ENCODE measurements at regions of chr4 and their contacts with region 1.

Region 1: GRCh38 chr4:36244257-36245079 is at the start of gene ARAP2:
- DNase-seq: peak; percentile 43 to 92 (median 67)
- ATAC-seq: peak; percentile 70
- H3K4me3 ChIP-seq: peak within 1 kb of the TSS; percentile 90
- H3K4me3 Mint-ChIP-seq: peak within 1 kb of the TSS; percentile 99
- H3K27ac ChIP-seq: peak within 1 kb of the TSS; percentile 76 to 93
- H3K27ac Mint-ChIP-seq: peak within 1 kb of the TSS; percentile 95
- H3K4me1 ChIP-seq: peaks cover 18% of the 10 kb centered on the region
- H3K4me1 Mint-ChIP-seq: peaks cover 50% of the 10 kb centered on the region
- H3K27me3 ChIP-seq: no peaks in the 10 kb centered on the region
- H3K27me3 Mint-ChIP-seq: no peaks in the 10 kb centered on the region
- CTCF ChIP-seq: no peak
- total RNA-seq, gene ARAP2: 54.3 to 63.4 TPM

Region 2: GRCh38 chr4:36224972-36225903 is 19.2 kb before region 1 on chr4:
- CTCF ChIA-PET with region 1: interaction called, 3 read pairs
- POLR2A ChIA-PET with region 1: interaction called, 12 read pairs
- intact Hi-C with region 1: no loop called
- DNase-seq: no peak
- ATAC-seq: no peak
- H3K4me3 ChIP-seq: no peak overlapping the region
- H3K4me3 Mint-ChIP-seq: peak overlapping the region; percentile 32
- H3K27ac ChIP-seq: no peak overlapping the region
- H3K27ac Mint-ChIP-seq: peak overlapping the region; percentile 65
- H3K4me1 ChIP-seq: peaks cover 9% of the 10 kb centered on the region
- H3K4me1 Mint-ChIP-seq: peaks cover 88% of the 10 kb centered on the region
- H3K27me3 ChIP-seq: no peaks in the 10 kb centered on the region
- H3K27me3 Mint-ChIP-seq: no peaks in the 10 kb centered on the region
- CTCF ChIP-seq: no peak

Region 3: DNA sequence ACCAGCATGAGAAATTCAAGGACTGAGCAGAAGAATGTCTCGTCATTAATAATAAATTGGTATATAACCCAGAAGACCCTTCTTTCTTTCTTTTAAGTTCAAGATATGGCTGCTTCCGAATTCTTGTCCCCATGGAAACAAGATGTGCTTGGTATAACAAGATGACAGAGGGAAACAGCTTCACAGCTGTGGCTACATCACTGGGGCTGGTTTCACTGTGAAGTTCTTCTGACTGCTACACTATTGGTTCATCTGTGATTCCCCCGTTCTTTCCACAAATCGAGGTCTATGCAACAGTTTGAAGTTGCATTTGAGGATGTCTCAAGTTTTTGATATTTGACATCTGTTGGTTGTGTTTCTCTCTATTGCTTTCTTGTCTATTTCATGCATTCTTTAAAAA is 24.6 kb after region 1 on chr4:
- CTCF ChIA-PET with region 1: interaction called, 4 read pairs
- POLR2A ChIA-PET with region 1: interaction called, 24 read pairs
- intact Hi-C with region 1: no loop called
- DNase-seq: peak in 6 of 14 experiments; percentile 11 to 87 (median 58)
- ATAC-seq: peak; percentile 92
- H3K4me3 ChIP-seq: no peak overlapping the region
- H3K4me3 Mint-ChIP-seq: no peak overlapping the region
- H3K27ac ChIP-seq: peak overlapping the region in 1 of 2 donors; percentile 35
- H3K27ac Mint-ChIP-seq: peak overlapping the region; percentile 74
- H3K4me1 ChIP-seq: no peaks in the 10 kb centered on the region
- H3K4me1 Mint-ChIP-seq: peaks cover 42% of the 10 kb centered on the region
- H3K27me3 ChIP-seq: no peaks in the 10 kb centered on the region
- H3K27me3 Mint-ChIP-seq: no peaks in the 10 kb centered on the region
- CTCF ChIP-seq: no peak

Region 4: GRCh38 chr4:36325499-36325898 is 81.0 kb after region 1 on chr4:
- CTCF ChIA-PET with region 1: interaction called, 6 read pairs
- POLR2A ChIA-PET with region 1: interaction called, 5 read pairs
- intact Hi-C with region 1: loop called (anchors 2 to 10 kb)
- DNase-seq: peak in 4 of 14 experiments; percentile 17 to 78 (median 70)
- ATAC-seq: peak; percentile 29
- H3K4me3 ChIP-seq: no peak overlapping the region
- H3K4me3 Mint-ChIP-seq: peak overlapping the region; percentile 1
- H3K27ac ChIP-seq: peak overlapping the region in 1 of 2 donors; percentile 4
- H3K27ac Mint-ChIP-seq: peak overlapping the region; percentile 28
- H3K4me1 ChIP-seq: peaks cover 24% of the 10 kb centered on the region
- H3K4me1 Mint-ChIP-seq: peaks cover 47% of the 10 kb centered on the region
- H3K27me3 ChIP-seq: no peaks in the 10 kb centered on the region
- H3K27me3 Mint-ChIP-seq: no peaks in the 10 kb centered on the region
- CTCF ChIP-seq: no peak

Region 5: GRCh38 chr4:36394352-36394903 is 150.0 kb after region 1 on chr4:
- CTCF ChIA-PET with region 1: interaction called, 15 read pairs
- POLR2A ChIA-PET with region 1: interaction called, 10 read pairs
- intact Hi-C with region 1: loop called (anchors 5 kb)
- DNase-seq: peak in 12 of 14 experiments; percentile 3 to 88 (median 38)
- ATAC-seq: peak; percentile 86
- H3K4me3 ChIP-seq: no peak overlapping the region
- H3K4me3 Mint-ChIP-seq: peak overlapping the region; percentile 13
- H3K27ac ChIP-seq: peak overlapping the region; percentile 45 to 48
- H3K27ac Mint-ChIP-seq: peak overlapping the region; percentile 77
- H3K4me1 ChIP-seq: peaks cover 6% of the 10 kb centered on the region
- H3K4me1 Mint-ChIP-seq: peaks cover 18% of the 10 kb centered on the region
- H3K27me3 ChIP-seq: no peaks in the 10 kb centered on the region
- H3K27me3 Mint-ChIP-seq: no peaks in the 10 kb centered on the region
- CTCF ChIP-seq: no peak

Region 6: DNA sequence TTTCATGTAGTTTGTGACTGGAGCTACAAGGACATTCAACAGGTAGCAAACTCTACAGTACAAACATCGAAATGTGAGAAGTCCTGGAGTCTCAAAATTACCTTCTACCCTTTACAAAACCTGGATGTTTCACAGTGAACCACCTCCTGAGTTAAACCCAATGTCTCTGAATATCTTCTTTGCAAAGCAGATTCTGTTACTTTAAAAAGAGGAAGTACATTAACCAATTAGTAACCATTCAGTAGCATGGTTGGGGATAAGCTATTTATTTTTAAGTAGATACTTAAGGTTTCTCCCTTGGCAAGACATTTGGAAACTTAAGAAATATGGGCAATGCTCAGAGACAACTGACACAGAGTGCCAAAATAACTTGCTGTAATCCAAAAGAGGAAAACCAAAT is 628.2 kb after region 1 on chr4:
- CTCF ChIA-PET with region 1: no interaction called
- POLR2A ChIA-PET with region 1: no interaction called
- intact Hi-C with region 1: no loop called
- DNase-seq: no peak
- ATAC-seq: no peak
- H3K4me3 ChIP-seq: no peak overlapping the region
- H3K4me3 Mint-ChIP-seq: no peak overlapping the region
- H3K27ac ChIP-seq: no peak overlapping the region
- H3K27ac Mint-ChIP-seq: no peak overlapping the region
- H3K4me1 ChIP-seq: no peaks in the 10 kb centered on the region
- H3K4me1 Mint-ChIP-seq: no peaks in the 10 kb centered on the region
- H3K27me3 ChIP-seq: no peaks in the 10 kb centered on the region
- H3K27me3 Mint-ChIP-seq: no peaks in the 10 kb centered on the region
- CTCF ChIP-seq: no peak